SK-N-SH (cell line): ENCODE measurements at regions of chr20 and their contacts with region 1.

Region 1: DNA sequence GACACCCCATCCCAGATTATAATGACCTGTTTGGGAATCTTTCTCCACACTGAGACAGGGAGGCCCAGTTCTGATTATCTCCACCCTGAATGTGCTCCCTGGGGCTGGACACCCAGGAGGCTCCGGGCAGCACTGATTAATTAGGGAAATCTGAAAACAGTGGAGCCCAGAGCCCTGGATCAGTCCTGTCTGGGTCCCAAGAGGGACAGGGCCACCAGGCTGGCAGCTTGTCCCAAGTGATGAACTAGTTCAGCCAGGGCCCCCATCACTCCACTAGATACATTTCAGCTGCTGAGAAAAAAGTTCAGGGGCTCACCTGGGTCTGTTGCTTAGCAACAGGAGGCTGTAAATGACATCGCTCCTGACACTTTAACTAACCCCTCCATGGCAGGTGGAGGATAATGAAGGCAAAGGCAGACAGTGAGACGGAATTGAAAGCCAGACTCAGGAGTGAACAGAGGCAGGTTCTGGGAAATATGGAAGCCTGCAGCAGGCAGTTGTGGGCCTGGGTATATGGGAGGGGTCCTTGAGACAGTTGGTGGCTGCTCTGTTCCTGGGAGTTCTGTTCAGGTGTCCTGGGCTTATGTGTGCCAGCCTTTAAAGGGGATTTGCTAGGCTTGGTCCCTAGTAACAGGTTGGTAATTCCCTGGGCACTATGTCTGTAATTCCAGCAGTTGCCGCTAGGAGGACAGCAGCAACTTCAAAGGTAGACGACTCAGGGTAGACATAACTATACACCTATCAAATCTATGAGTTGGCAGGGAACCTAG is 78.3 kb upstream of the CTNNBL1 start:
- DNase-seq: peak; percentile 53
- H3K4me3 ChIP-seq: no peak overlapping the region
- H3K27ac ChIP-seq: no peak overlapping the region
- H3K4me1 ChIP-seq: no peaks in the 10 kb centered on the region
- H3K27me3 ChIP-seq: peaks cover 13% of the 10 kb centered on the region
- CTCF ChIP-seq: peak; percentile 64
- EP300 ChIP-seq: no peak
- RAD21 ChIP-seq: peak; percentile 51

Region 2: GRCh38 chr20:37598100-37598543 is 17.4 kb before region 1 on chr20:
- CTCF ChIA-PET with region 1: interaction called, 13 read pairs
- POLR2A ChIA-PET with region 1: no interaction called
- DNase-seq: peak; percentile 76
- H3K4me3 ChIP-seq: no peak overlapping the region; a peak in 1 of 4 replicates
- H3K27ac ChIP-seq: peak overlapping the region in 1 of 2 experiments; percentile 78; a peak in 2 of 4 replicates
- H3K4me1 ChIP-seq: peaks cover 0 to 24% of the 10 kb centered on the region in 2 experiments; a peak in 2 of 4 replicates
- H3K27me3 ChIP-seq: no peaks in the 10 kb centered on the region; the same call in 1 of the 2 replicates
- CTCF ChIP-seq: no peak
- EP300 ChIP-seq: no peak
- RAD21 ChIP-seq: no peak

Region 3: GRCh38 chr20:37627060-37627769 is 11.7 kb after region 1 on chr20:
- CTCF ChIA-PET with region 1: interaction called, 17 read pairs
- POLR2A ChIA-PET with region 1: no interaction called
- DNase-seq: no peak
- H3K4me3 ChIP-seq: no peak overlapping the region
- H3K27ac ChIP-seq: no peak overlapping the region; a peak in 1 of 4 replicates
- H3K4me1 ChIP-seq: peaks cover 0 to 14% of the 10 kb centered on the region in 2 experiments; a peak in 2 of 4 replicates
- H3K27me3 ChIP-seq: peaks cover 8% of the 10 kb centered on the region; the same call in 1 of the 2 replicates
- CTCF ChIP-seq: no peak
- EP300 ChIP-seq: 0 out of 4 replicates have a peak, but pooled peaks of 1 of the 2 experiments have one; percentile 24
- RAD21 ChIP-seq: no peak

Region 4: GRCh38 chr20:37789408-37789807 is 173.9 kb after region 1 on chr20:
- CTCF ChIA-PET with region 1: no interaction called
- POLR2A ChIA-PET with region 1: no interaction called
- DNase-seq: no peak
- H3K4me3 ChIP-seq: no peak overlapping the region
- H3K27ac ChIP-seq: no peak overlapping the region
- H3K4me1 ChIP-seq: no peaks in the 10 kb centered on the region
- H3K27me3 ChIP-seq: no peaks in the 10 kb centered on the region
- CTCF ChIP-seq: no peak
- EP300 ChIP-seq: no peak
- RAD21 ChIP-seq: no peak